ENCODE measurements at regions of chr6 and their contacts with region 1.

Region 1: DNA sequence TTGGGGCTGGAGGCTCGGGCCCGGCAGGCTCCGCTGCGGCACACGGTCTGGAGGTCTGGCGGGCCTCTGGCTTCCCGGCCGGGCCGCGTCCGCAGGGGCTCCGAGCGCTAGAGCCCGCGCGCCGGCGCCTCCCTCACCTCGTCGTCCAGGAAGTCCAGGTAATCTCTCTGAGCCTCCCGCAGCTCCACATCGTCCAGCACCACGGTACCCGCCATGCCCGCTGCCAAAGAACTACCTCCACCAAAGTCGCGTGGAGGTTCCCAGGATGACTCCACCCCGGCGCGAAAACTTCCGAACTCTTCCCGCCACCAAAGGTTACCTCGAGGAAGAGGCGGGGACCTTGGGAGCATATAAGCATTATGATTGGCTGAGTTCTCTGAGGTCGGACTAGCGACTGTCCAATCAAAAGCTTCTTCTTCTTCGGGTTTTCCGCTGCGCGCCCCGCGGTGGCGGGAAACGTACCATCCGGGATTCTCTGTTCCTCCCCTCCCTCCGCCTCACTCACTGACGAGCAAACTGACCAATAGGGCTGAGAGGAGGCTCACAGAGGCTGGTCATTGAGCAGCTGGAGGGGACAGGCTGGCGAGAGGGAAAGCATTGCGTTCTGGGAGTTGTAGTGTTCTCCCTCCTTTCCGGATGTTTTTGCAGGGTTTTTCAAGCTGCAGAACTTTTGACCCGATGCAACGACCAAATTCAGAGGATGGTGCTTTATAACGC is at the start of gene MCM3:
- DNase-seq: peak; percentile 99
- H3K4me3 ChIP-seq: peak within 1 kb of the TSS; percentile 81
- H3K27me3 ChIP-seq: no peaks in the 10 kb centered on the region
- CTCF ChIP-seq: peak; percentile 25; the same call in 1 of the 2 replicates
- polyA plus RNA-seq, gene MCM3: 33.3 and 42.2 TPM in 2 replicates

Region 2: GRCh38 chr6:51968265-51968664 is 316.4 kb before region 1 on chr6:
- CTCF ChIA-PET with region 1: no interaction called
- POLR2A ChIA-PET with region 1: no interaction called
- DNase-seq: no peak
- H3K4me3 ChIP-seq: no peak overlapping the region
- H3K27me3 ChIP-seq: no peaks in the 10 kb centered on the region
- CTCF ChIP-seq: no peak

Region 3: DNA sequence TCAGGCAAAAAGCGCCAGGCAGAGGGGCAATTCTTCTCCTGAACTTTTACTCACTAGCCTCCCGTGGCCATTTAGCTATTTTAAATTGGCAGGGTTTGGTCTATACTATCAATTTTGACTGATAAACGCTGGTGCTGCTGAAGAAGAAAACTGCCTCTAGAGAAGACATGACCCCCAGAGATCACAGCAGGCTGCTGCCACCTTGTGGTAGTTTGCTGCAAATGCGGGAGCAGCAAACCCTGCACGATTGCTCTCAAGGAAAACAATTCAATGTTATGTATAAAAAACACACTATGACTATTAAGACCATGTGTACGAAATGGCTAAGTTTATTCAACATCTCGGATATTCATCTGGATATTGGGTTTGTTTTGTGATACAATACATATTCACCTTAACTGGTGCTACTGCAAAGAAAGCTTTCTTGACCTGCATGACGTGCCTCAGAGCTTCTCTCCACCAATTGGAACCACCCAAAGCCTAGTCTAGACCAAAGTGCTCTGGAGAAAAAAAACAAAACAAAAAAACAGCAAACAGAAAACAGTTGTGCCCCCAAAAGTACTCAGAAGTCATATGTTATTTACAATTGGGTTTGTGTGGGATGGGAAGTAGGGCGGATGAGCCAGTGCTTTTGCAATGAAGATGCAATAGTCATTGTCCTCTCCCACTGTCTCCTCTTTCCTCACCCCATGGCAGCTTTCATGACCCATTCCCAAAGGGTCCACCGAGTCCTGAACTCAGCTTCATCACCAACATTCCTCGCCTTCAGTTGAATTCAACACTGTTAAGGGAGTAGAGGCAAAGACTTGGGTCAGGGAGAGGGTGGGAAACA is 20.7 kb before region 1 on chr6:
- CTCF ChIA-PET with region 1: interaction called, 12 read pairs
- POLR2A ChIA-PET with region 1: no interaction called
- DNase-seq: no peak
- H3K4me3 ChIP-seq: no peak overlapping the region
- H3K27me3 ChIP-seq: no peaks in the 10 kb centered on the region
- CTCF ChIP-seq: peak; percentile 99

Region 4: GRCh38 chr6:52361945-52362442 is 77.4 kb after region 1 on chr6 and contains the start of gene PAQR8:
- CTCF ChIA-PET with region 1: interaction called, 11 read pairs
- POLR2A ChIA-PET with region 1: no interaction called
- DNase-seq: no peak
- H3K4me3 ChIP-seq: peak within 1 kb of the TSS; percentile 86
- H3K27me3 ChIP-seq: no peaks in the 10 kb centered on the region
- CTCF ChIP-seq: no peak
- polyA plus RNA-seq, gene PAQR8: 2.2 and 2.3 TPM in 2 replicates

Region 5: DNA sequence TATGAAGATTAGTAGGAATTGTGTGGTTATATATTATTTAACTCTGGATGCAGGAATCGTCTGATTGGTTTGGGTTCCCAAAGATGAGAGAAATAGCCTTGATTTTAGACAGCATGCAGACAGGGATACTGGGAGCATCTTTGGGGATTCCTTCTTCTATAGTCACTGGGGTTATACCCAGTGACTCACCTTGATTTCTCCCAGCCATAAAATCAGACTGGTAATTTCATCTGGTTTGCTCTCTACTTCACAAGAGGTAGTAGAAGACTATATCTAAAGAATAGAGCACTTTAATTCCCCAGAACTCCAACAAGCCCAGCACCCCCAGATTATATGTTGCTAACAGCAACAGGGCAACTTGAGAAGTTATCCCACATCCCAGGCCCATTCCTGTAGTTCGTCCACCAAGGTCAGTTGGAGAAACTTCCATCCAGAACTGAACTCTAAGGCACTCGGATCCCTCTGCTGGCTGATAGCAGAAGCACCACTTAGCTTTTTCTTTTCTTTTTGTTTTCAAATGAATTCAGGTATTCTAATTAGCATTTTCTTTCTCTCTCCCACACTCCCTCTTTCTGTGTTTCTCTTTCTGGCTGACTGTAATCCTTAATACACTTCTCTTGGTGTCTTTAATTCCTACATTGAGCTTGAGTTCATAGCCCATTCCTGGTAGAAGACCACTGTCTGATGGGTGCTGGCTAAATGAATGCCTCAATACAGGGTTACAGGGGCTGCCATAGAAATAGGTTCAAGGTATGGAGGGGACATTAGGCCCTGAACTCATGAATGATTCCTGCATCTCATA is 115.1 kb after region 1 on chr6:
- CTCF ChIA-PET with region 1: interaction called, 22 read pairs
- POLR2A ChIA-PET with region 1: no interaction called
- DNase-seq: no peak
- H3K4me3 ChIP-seq: no peak overlapping the region
- H3K27me3 ChIP-seq: no peaks in the 10 kb centered on the region
- CTCF ChIP-seq: peak; percentile 84

Region 6: DNA sequence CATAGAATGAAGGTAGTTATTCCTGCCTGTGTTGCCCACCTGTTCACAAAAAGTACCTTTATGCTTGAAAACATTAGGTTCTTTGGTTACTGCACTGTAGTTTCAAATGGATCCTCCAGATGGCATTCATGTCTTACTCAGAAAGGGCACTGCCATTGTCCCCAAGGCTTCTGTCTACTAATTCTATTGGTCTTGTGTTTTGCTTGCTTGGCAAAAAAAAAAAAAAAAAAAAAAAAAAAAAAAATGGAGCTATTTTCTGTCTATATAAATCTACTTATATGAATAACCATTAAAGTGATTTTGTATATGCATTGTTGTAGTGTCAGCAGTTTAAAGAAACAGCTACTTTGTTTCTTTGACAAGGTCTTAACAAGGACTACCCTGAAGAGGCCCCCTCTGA is 122.8 kb after region 1 on chr6:
- CTCF ChIA-PET with region 1: interaction called, 14 read pairs
- POLR2A ChIA-PET with region 1: no interaction called
- DNase-seq: no peak
- H3K4me3 ChIP-seq: no peak overlapping the region
- H3K27me3 ChIP-seq: no peaks in the 10 kb centered on the region
- CTCF ChIP-seq: peak; percentile 56

Region 7: GRCh38 chr6:52663120-52663935 is 378.7 kb after region 1 on chr6:
- CTCF ChIA-PET with region 1: interaction called, 12 read pairs
- POLR2A ChIA-PET with region 1: no interaction called
- DNase-seq: peak; percentile 29
- H3K4me3 ChIP-seq: peak overlapping the region; percentile 82
- H3K27me3 ChIP-seq: no peaks in the 10 kb centered on the region
- CTCF ChIP-seq: peak; percentile 76